Esophagus muscularis mucosa (tissue), 4 donors: ENCODE measurements at regions of chr6 and their contacts with region 1.

Region 1: GRCh38 chr6:166097915-166098522 is 69.6 kb downstream of the TBXT start:
- DNase-seq: peak; percentile 92
- H3K4me3 ChIP-seq: peak overlapping the region; percentile 45 to 51 (median 48)
- H3K27ac ChIP-seq: peak overlapping the region in 1 of 4 donors; percentile 22
- H3K4me1 ChIP-seq: peaks cover 0 to 12% (median 4%) of the 10 kb centered on the region in 4 donors
- H3K27me3 ChIP-seq: no peaks in the 10 kb centered on the region
- CTCF ChIP-seq: peak; percentile 83 to 92 (median 90)
- EP300 ChIP-seq: no peak
- POLR2A ChIP-seq: no peak

Region 2: DNA sequence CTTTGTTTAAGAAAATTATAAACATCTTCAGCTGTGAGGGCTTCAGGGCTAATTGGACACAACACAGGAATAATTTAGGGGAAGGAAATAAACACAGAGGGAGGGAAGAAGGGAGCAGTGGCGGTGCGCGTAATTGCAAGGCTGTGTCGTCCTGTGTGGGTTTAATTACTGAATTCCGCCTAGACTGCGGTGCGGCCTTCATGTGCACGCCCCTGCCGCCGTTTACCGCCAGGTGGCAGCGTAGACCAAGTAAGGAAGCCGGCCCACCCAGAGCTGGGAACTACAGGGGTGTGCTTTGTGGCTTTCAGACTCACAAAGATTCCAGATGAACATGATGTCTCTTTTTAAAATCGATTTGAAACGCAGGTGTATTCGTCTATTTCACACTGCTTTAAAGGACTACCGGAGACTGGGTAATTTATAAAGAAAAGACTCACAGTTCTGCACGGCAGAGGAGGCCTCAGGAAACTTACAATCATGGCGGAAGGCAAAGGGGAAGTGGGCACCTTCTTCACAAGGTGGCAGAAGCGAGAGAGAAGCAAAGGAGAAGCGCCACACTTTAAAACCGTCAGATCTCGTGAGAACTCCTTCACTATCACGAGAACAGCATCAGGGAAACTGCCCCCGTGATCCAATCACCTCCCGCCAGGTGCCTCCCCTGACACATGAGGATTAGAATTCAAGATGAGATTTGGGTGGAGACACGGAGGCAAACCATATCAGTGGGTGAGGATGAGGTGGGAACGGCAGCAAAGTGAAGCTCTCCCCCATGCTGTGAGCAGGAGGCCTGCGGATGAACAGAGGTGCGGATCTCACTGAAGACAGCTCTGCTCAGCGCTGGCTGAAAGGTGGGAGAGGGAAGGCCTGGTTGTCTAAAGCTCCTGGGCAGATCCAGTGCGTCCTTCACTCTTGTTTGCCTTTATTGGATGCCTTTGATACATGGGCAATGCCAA is 212.9 kb before region 1 on chr6:
- intact Hi-C with region 1: loop called (anchors 2 kb)
- DNase-seq: peak; percentile 93
- H3K4me3 ChIP-seq: no peak overlapping the region
- H3K27ac ChIP-seq: peak overlapping the region in 1 of 4 donors; percentile 16
- H3K4me1 ChIP-seq: peaks cover 0 to 21% (median 16%) of the 10 kb centered on the region in 4 donors
- H3K27me3 ChIP-seq: no peaks in the 10 kb centered on the region
- CTCF ChIP-seq: peak; percentile 89 to 98 (median 92)
- EP300 ChIP-seq: no peak
- POLR2A ChIP-seq: no peak

Region 3: GRCh38 chr6:165987483-165988301 is 110.3 kb before region 1 on chr6:
- intact Hi-C with region 1: loop called (anchors 5 kb)
- DNase-seq: no peak
- H3K4me3 ChIP-seq: peak overlapping the region; percentile 58 to 65 (median 61)
- H3K27ac ChIP-seq: peak overlapping the region; percentile 43 to 70 (median 68)
- H3K4me1 ChIP-seq: peaks cover 10 to 41% (median 31%) of the 10 kb centered on the region in 4 donors
- H3K27me3 ChIP-seq: peaks cover 0 to 36% (median 2%) of the 10 kb centered on the region in 4 donors
- CTCF ChIP-seq: no peak
- EP300 ChIP-seq: peak; percentile 14
- POLR2A ChIP-seq: no peak